ENCODE measurements at regions of chr4 and their contacts with region 1.

Region 1: DNA sequence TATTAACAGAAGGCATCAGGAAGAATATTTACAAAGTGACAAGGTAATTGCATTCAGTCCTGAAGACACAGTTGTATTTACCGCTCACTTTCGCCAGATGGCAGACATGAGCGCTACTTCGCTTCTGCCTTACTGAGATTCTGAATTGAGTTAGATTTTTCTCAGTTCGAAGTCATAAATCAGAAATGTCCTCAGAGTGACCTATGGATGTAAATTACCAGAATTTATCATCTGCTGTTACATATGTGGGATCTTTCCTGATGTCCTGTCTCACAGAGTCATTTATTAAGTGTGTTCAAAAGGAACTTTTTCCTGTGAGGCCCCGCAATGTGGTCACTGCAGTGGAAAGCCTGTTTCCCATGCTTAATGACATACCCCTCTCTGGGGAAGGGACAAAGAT is 97.3 kb upstream of the DCLK2 start:
- DNase-seq: peak; percentile 65
- ATAC-seq: peak; percentile 91
- H3K4me3 ChIP-seq: no peak overlapping the region
- H3K27ac ChIP-seq: no peak overlapping the region
- H3K4me1 ChIP-seq: no peaks in the 10 kb centered on the region
- H3K27me3 ChIP-seq: no peaks in the 10 kb centered on the region
- CTCF ChIP-seq: peak; percentile 73
- POLR2A ChIP-seq: no peak
- RAD21 ChIP-seq: peak; percentile 82

Region 2: GRCh38 chr4:150867148-150867547 is 886.2 kb after region 1 on chr4:
- CTCF ChIA-PET with region 1: no interaction called
- POLR2A ChIA-PET with region 1: no interaction called
- dilution Hi-C with region 1: no loop called
- in situ Hi-C with region 1: loop called (anchors 10 kb)
- intact Hi-C with region 1: loop called (anchors 2 kb)
- DNase-seq: peak; percentile 81
- ATAC-seq: peak; percentile 72
- H3K4me3 ChIP-seq: no peak overlapping the region
- H3K27ac ChIP-seq: no peak overlapping the region
- H3K4me1 ChIP-seq: no peaks in the 10 kb centered on the region
- H3K27me3 ChIP-seq: no peaks in the 10 kb centered on the region
- CTCF ChIP-seq: peak; percentile 76
- POLR2A ChIP-seq: no peak
- RAD21 ChIP-seq: peak; percentile 77

Region 3: GRCh38 chr4:150874338-150875226 is 893.6 kb after region 1 on chr4:
- CTCF ChIA-PET with region 1: no interaction called
- POLR2A ChIA-PET with region 1: no interaction called
- dilution Hi-C with region 1: no loop called
- in situ Hi-C with region 1: loop called (anchors 10 kb)
- intact Hi-C with region 1: no loop called
- DNase-seq: no peak
- ATAC-seq: peak; percentile 32; the same call in 1 of the 2 replicates
- H3K4me3 ChIP-seq: no peak overlapping the region
- H3K27ac ChIP-seq: no peak overlapping the region
- H3K4me1 ChIP-seq: peaks cover 1% of the 10 kb centered on the region; the same call in 1 of the 2 replicates
- H3K27me3 ChIP-seq: no peaks in the 10 kb centered on the region
- CTCF ChIP-seq: no peak
- POLR2A ChIP-seq: no peak
- RAD21 ChIP-seq: no peak

Region 4: GRCh38 chr4:151099229-151099975 is 1118.5 kb after region 1 on chr4 and contains the start of gene RPS3A:
- CTCF ChIA-PET with region 1: no interaction called
- POLR2A ChIA-PET with region 1: no interaction called
- dilution Hi-C with region 1: no loop called
- in situ Hi-C with region 1: no loop called
- intact Hi-C with region 1: loop called (anchors 10 kb)
- DNase-seq: peak; percentile 98
- ATAC-seq: peak; percentile 97
- H3K4me3 ChIP-seq: peak within 1 kb of the TSS; percentile 97
- H3K27ac ChIP-seq: peak within 1 kb of the TSS; percentile 82
- H3K4me1 ChIP-seq: no peaks in the 10 kb centered on the region
- H3K27me3 ChIP-seq: no peaks in the 10 kb centered on the region
- CTCF ChIP-seq: peak; percentile 94
- POLR2A ChIP-seq: peak; percentile 97
- RAD21 ChIP-seq: no peak
- total RNA-seq, gene RPS3A: 1,618 and 2,908 TPM in 2 replicates

Measured in IMR-90 (cell line).